H1 (cell line): ENCODE measurements at regions of chr6 and their contacts with region 1.

Region 1: DNA sequence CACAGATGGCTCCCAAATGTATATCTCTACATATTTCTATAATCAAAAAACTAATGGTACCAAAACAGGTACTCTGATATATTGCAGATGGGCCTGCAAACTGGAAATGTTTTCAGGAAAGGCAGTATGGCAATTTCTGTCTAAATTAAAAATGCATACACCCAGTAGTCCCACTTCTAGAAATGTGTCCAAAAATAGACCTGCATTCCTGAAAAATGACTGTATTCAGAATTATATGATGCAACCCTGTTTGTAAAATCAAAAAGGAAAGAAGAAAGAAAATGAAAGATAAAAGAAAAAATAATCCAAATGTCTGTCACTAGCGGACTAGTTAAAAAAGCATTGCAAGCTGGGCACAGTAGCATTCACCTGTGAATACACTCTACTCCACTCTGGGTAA is 12.9 kb upstream of the MICB start:
- DNase-seq: no peak
- H3K4me3 ChIP-seq: no peak overlapping the region
- H3K27ac ChIP-seq: no peak overlapping the region
- H3K4me1 ChIP-seq: no peaks in the 10 kb centered on the region
- H3K27me3 ChIP-seq: no peaks in the 10 kb centered on the region; a peak in 1 of 7 replicates
- CTCF ChIP-seq: no peak
- EP300 ChIP-seq: no peak
- POLR2A ChIP-seq: no peak
- RAD21 ChIP-seq: no peak

Region 2: GRCh38 chr6:31299511-31299910 is 185.5 kb before region 1 on chr6:
- CTCF ChIA-PET with region 1: no interaction called
- POLR2A ChIA-PET with region 1: no interaction called
- DNase-seq: no peak
- H3K4me3 ChIP-seq: no peak overlapping the region
- H3K27ac ChIP-seq: no peak overlapping the region
- H3K4me1 ChIP-seq: no peaks in the 10 kb centered on the region
- H3K27me3 ChIP-seq: no peaks in the 10 kb centered on the region
- CTCF ChIP-seq: no peak
- EP300 ChIP-seq: no peak
- POLR2A ChIP-seq: no peak
- RAD21 ChIP-seq: no peak

Region 3: DNA sequence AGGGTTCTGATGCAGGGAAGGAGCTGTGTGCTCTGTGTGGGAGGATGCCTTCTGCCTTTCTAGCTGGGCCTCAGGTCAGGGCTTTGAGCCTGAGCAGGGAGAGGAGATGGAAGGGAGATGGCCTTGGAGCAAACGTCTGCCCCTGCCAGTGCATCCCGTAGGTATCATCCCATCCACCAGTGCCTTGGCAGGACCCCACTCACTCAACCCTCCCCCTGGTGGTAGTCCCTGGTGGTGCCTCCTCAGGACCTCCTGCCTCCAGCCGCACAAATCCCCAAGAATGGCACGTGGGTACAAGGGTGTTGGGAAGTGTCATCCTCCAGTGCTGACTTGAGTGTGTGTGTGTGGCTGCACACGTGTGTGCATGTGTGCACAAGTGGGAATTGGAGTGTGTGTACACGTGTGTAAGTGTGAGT is 10.2 kb before region 1 on chr6:
- CTCF ChIA-PET with region 1: interaction called, 10 read pairs
- POLR2A ChIA-PET with region 1: interaction called, 3 read pairs
- DNase-seq: peak in 1 of 2 experiments; percentile 87
- H3K4me3 ChIP-seq: no peak overlapping the region
- H3K27ac ChIP-seq: no peak overlapping the region
- H3K4me1 ChIP-seq: no peaks in the 10 kb centered on the region
- H3K27me3 ChIP-seq: peaks cover 0 to 2% (median 0%) of the 10 kb centered on the region in 4 experiments; a peak in 2 of 7 replicates
- CTCF ChIP-seq: peak; percentile 58 to 84 (median 82)
- EP300 ChIP-seq: no peak
- POLR2A ChIP-seq: no peak
- RAD21 ChIP-seq: peak; percentile 15 to 43; a peak in 3 of 4 replicates